Activated naive CD4-positive, alpha-beta T cell treated with anti-CD3 and anti-CD28 coated beads for 36 hours (primary cell): ENCODE measurements at regions of chr7 and their contacts with region 1.

Region 1: DNA sequence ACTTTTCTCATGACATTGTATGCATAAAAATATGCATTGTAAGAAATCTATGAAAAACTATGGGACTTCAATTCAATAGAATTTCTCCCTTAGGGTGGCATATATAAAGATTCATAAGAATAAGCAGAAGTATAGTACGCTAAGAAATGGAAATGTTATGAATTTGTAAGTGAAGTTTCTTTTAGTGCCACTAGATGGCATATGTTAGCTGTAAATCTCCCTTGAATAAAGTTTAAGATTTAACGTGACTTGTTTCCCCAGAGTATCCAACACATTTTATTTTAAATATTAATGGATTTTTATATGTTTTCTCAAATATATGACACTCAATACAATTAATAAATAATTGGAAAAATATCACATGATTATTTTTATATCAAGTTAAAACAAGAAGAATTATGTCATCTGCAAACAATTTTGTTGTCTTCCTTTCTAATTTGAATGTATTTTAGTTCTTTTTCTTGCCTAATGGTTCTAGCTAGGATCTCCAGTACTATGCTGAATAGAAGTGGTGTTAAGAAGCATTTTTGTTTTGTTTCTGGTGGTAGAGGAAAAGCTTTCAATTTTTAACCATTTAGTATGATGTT is 287.2 kb downstream of the HGF start:
- DNase-seq: no peak
- H3K4me3 Mint-ChIP-seq: no peak overlapping the region
- H3K27ac Mint-ChIP-seq: no peak overlapping the region
- H3K4me1 Mint-ChIP-seq: no peaks in the 10 kb centered on the region
- H3K27me3 Mint-ChIP-seq: no peaks in the 10 kb centered on the region

Region 2: GRCh38 chr7:81439591-81439990 is 43.1 kb before region 1 on chr7:
- CTCF ChIA-PET with region 1: no interaction called
- intact Hi-C with region 1: no loop called
- DNase-seq: no peak
- H3K4me3 Mint-ChIP-seq: no peak overlapping the region
- H3K27ac Mint-ChIP-seq: no peak overlapping the region
- H3K4me1 Mint-ChIP-seq: no peaks in the 10 kb centered on the region
- H3K27me3 Mint-ChIP-seq: no peaks in the 10 kb centered on the region

Region 3: GRCh38 chr7:81956520-81956919 is 473.8 kb after region 1 on chr7:
- CTCF ChIA-PET with region 1: no interaction called
- intact Hi-C with region 1: loop called (anchors 5 kb)
- DNase-seq: no peak
- H3K4me3 Mint-ChIP-seq: no peak overlapping the region
- H3K27ac Mint-ChIP-seq: no peak overlapping the region
- H3K4me1 Mint-ChIP-seq: no peaks in the 10 kb centered on the region
- H3K27me3 Mint-ChIP-seq: no peaks in the 10 kb centered on the region

Region 4: GRCh38 chr7:82044497-82045080 is 561.9 kb after region 1 on chr7:
- CTCF ChIA-PET with region 1: interaction called, 3 read pairs
- intact Hi-C with region 1: loop called (anchors 10 kb)
- DNase-seq: peak; percentile 46
- H3K4me3 Mint-ChIP-seq: no peak overlapping the region
- H3K27ac Mint-ChIP-seq: no peak overlapping the region
- H3K4me1 Mint-ChIP-seq: no peaks in the 10 kb centered on the region
- H3K27me3 Mint-ChIP-seq: no peaks in the 10 kb centered on the region

Region 5: GRCh38 chr7:82481499-82482097 is 998.9 kb after region 1 on chr7:
- CTCF ChIA-PET with region 1: no interaction called
- intact Hi-C with region 1: loop called (anchors 5 kb)
- DNase-seq: no peak
- H3K4me3 Mint-ChIP-seq: no peak overlapping the region
- H3K27ac Mint-ChIP-seq: no peak overlapping the region
- H3K4me1 Mint-ChIP-seq: no peaks in the 10 kb centered on the region
- H3K27me3 Mint-ChIP-seq: peaks cover under 1% of the 10 kb centered on the region

Region 6: DNA sequence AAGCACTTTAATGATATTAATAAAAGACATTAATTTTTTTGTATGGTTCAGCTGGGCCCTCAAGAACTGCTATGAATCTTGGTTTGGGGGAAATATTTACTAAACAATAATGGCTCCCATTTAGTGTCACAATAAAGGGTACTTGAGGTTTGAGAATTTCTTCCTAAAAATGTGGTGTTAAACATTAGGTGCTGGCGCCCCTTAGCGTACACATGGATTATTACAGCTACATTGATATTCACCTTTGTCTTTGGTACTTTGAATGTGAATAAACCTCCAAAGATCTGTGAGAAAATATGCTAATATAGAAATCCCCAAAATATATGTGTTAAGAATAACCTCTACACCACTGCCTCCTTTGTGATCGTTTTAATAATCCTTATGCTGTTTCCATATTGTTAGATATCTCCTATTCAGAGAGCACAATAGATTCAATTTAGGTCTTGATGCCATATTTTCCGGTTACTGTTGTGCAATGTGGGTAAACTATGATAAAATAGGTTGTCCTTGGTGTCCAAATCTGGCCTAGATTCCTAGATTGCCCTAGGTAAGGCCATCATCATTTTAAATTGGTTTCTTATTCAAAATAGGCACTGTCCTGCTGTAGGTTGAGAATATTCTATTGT is 1122.7 kb after region 1 on chr7:
- CTCF ChIA-PET with region 1: interaction called, 7 read pairs
- intact Hi-C with region 1: loop called (anchors 1 kb)
- DNase-seq: peak; percentile 20
- H3K4me3 Mint-ChIP-seq: no peak overlapping the region
- H3K27ac Mint-ChIP-seq: no peak overlapping the region
- H3K4me1 Mint-ChIP-seq: no peaks in the 10 kb centered on the region
- H3K27me3 Mint-ChIP-seq: no peaks in the 10 kb centered on the region